Mucosa of descending colon (tissue), 3 donors: ENCODE measurements at regions of chr6 and their contacts with region 1.

Region 1: GRCh38 chr6:166402582-166403277 is 20.0 kb upstream of the MPC1 start:
- DNase-seq: no peak
- ATAC-seq: no peak
- H3K4me3 ChIP-seq: no peak overlapping the region
- H3K4me1 ChIP-seq: no peaks in the 10 kb centered on the region
- CTCF ChIP-seq: no peak

Region 2: GRCh38 chr6:166275714-166276166 is 127.0 kb before region 1 on chr6:
- intact Hi-C with region 1: loop called (anchors 5 to 10 kb)
- DNase-seq: peak; percentile 76 to 87 (median 79)
- ATAC-seq: peak; percentile 96
- H3K4me3 ChIP-seq: no peak overlapping the region
- H3K4me1 ChIP-seq: no peaks in the 10 kb centered on the region
- CTCF ChIP-seq: peak; percentile 93

Region 3: GRCh38 chr6:166313255-166314070 is 89.3 kb before region 1 on chr6:
- intact Hi-C with region 1: loop called in 1 of 2 experiments (anchors 5 kb)
- DNase-seq: peak in 2 of 3 donors; percentile 40 to 50
- ATAC-seq: peak; percentile 75
- H3K4me3 ChIP-seq: no peak overlapping the region
- H3K4me1 ChIP-seq: peaks cover 1% of the 10 kb centered on the region
- CTCF ChIP-seq: no peak

Region 4: GRCh38 chr6:166572370-166573261 is 169.9 kb after region 1 on chr6:
- intact Hi-C with region 1: no loop called
- DNase-seq: peak in 1 of 3 donors; percentile 34
- ATAC-seq: peak; percentile 55
- H3K4me3 ChIP-seq: no peak overlapping the region
- H3K4me1 ChIP-seq: peaks cover 2% of the 10 kb centered on the region
- CTCF ChIP-seq: no peak

Region 5: GRCh38 chr6:167751436-167752130 is 1348.9 kb after region 1 on chr6:
- intact Hi-C with region 1: no loop called
- DNase-seq: no peak
- ATAC-seq: no peak
- H3K4me3 ChIP-seq: no peak overlapping the region
- H3K4me1 ChIP-seq: peaks cover 7% of the 10 kb centered on the region
- CTCF ChIP-seq: no peak